OCI-LY7 (cell line): ENCODE measurements at regions of chr13 and their contacts with region 1.

Region 1: GRCh38 chr13:64725492-64725891 is 2504.6 kb downstream of the PCDH9 start:
- DNase-seq: no peak
- H3K4me3 ChIP-seq: no peak overlapping the region
- H3K27ac ChIP-seq: no peak overlapping the region
- H3K4me1 ChIP-seq: no peaks in the 10 kb centered on the region
- CTCF ChIP-seq: no peak

Region 2: DNA sequence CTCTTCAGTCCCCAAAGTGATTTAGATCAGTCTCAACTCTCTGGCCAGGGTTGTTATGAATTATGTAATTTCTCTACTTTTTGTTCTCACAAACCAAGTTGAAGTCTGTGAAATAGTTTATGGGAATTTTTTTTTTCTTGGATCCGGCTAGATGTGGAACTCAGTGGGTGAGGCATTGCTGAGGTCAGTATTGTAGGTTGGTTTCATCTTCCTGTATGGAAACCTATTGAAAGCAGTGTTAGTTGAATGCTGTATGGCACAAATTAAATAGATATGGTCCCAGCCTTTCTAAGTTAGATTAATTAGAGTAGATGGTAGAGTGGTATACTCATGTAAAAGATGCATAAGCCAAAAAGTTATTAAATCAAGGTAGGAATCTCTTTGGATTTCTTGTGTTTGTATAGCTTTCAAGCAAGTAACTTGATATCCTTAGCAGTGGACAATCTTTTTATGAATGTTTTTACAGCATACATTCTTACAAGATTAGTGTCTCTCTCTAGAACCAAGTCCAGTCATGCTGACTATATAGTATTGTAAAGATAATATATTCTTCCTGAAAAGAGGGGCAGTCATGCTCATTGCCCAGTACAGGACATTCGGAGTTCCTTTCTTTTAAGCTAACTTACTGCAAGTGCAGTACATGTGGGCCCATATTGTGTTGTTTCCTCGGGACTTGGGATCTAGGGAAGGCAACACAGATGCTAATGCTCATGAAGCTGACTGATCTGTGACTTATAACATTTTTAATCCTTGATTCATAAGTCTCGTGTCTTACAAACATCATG is 36.4 kb before region 1 on chr13:
- CTCF ChIA-PET with region 1: no interaction called
- POLR2A ChIA-PET with region 1: no interaction called
- intact Hi-C with region 1: loop called (anchors 2 kb)
- DNase-seq: no peak
- H3K4me3 ChIP-seq: no peak overlapping the region
- H3K27ac ChIP-seq: no peak overlapping the region
- H3K4me1 ChIP-seq: no peaks in the 10 kb centered on the region
- CTCF ChIP-seq: no peak

Region 3: DNA sequence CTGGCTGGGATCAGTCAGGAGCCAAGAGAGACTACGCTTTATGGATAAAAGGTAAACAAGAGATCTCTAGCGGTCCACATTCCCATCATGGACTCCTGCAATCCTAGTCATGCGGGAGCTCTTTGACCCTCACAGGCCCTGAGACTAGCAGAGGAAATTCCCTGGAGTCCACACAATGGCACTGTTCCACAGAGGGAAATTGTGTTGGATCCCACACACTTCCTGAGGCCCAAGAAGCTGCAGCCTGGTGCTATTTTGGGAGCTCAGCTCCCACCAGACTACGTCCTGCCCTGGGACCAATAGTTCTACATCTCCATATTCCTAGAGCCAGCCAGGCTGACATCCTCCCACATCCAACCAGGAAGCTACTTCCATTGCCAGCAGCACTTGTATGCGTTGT is 146.2 kb after region 1 on chr13:
- CTCF ChIA-PET with region 1: no interaction called
- POLR2A ChIA-PET with region 1: no interaction called
- intact Hi-C with region 1: no loop called
- DNase-seq: no peak
- H3K4me3 ChIP-seq: no peak overlapping the region
- H3K27ac ChIP-seq: no peak overlapping the region
- H3K4me1 ChIP-seq: no peaks in the 10 kb centered on the region
- CTCF ChIP-seq: no peak